Activated naive CD8-positive, alpha-beta T cell treated with anti-CD3 and anti-CD28 coated beads, Interleukin-2, amount 10 ng/mL, durations not matched to agents 7 days and 5 days (primary cell): ENCODE measurements at regions of chr7 and their contacts with region 1.

Region 1: DNA sequence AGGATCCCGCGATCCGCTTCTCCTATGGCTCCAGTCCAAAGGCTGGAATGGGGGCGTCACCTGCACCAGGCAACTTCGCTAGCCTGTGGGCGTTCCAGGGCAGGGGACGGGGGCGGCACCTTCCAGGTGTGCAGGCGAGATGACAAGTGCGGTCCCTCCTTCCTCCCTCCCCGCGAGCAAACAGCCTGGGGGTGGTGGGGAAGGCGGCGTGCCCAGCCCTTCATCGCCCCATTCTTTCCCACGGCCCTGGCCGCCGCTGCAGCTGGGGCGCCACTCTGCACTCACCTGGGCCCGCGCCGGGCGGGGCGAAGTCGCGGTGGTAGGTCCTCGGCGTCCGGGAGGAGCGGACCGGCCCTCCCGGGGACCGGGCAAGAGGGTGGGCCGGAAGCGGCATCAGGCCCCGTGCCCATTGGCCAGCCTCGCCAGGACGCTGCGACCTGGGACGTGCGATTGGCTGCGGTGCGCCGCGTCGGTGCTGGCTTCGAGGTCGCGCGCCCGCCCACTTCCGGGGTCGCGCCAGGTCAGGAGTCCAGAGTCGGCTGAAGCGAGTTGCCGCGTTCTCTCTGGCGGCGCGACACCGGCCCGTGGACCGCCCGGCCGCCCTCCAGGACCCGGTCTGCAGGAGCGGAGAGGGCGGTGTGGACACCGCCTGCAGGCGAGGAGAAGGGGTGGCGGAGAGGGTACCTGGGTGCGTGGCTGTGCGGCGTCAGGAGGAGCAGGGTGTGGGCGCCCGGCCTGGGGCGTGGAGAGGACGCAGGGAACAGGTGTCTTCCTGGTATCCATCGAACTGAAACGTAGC is at the start of gene TECPR1:
- DNase-seq: peak; percentile 94
- ATAC-seq: peak; percentile 89
- H3K4me3 Mint-ChIP-seq: peak within 1 kb of the TSS; percentile 94
- H3K27ac Mint-ChIP-seq: peak within 1 kb of the TSS; percentile 94
- H3K4me1 Mint-ChIP-seq: peaks cover 47% of the 10 kb centered on the region
- H3K27me3 Mint-ChIP-seq: no peaks in the 10 kb centered on the region
- total RNA-seq, gene TECPR1: 78.9 to 80.2 TPM

Region 2: DNA sequence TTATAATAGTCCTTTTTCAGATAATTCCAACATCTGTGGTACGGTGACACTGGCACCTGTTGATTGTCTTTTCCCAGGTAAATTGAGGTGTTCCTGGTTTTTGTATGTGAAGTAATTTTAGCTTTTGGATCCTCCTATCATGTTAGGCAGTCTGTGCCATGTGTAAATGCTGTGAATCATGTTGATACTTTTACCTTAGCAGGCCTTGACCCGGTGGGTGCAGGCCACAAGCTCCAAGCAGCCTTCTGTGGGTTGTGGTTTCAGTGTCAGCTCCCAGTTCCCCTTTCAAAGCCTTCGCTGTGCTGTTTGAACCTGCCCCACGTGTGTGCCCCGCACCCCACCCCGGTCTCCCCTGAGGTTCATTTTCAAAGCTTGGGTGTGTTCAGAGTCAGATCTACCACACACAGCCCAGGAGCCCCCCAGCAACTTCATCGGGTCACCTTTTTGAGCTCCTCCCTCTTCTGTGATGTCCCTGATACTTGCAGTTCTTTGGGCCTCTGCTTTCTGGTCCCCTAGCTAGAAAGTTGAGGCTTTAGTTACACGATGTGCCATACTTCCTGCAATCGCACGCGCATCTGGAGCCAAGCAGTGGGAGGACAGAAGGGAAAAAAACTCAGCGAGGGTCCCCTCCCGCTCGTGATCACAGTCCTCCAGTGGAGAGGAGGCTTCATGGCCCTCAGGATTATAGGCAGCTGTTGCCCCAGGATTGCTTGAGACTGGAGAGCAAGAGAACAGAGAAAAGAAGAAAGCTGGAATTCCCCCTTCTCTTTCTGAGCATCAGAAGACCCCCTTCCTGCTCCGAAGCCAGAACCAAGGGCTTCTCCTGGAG is 49.5 kb before region 1 on chr7:
- POLR2A ChIA-PET with region 1: interaction called, 26 read pairs
- DNase-seq: peak; percentile 80
- ATAC-seq: peak; percentile 85
- H3K4me3 Mint-ChIP-seq: peak overlapping the region; percentile 77
- H3K27ac Mint-ChIP-seq: peak overlapping the region; percentile 86
- H3K4me1 Mint-ChIP-seq: peaks cover 35% of the 10 kb centered on the region
- H3K27me3 Mint-ChIP-seq: no peaks in the 10 kb centered on the region

Region 3: GRCh38 chr7:98234429-98235147 is 17.5 kb before region 1 on chr7:
- POLR2A ChIA-PET with region 1: no interaction called
- DNase-seq: no peak
- ATAC-seq: no peak
- H3K4me3 Mint-ChIP-seq: no peak overlapping the region
- H3K27ac Mint-ChIP-seq: no peak overlapping the region
- H3K4me1 Mint-ChIP-seq: no peaks in the 10 kb centered on the region
- H3K27me3 Mint-ChIP-seq: no peaks in the 10 kb centered on the region